Esophagus muscularis mucosa (tissue), 4 donors: ENCODE measurements at regions of chr14 and their contacts with region 1.

Region 1: GRCh38 chr14:104976198-104977007 is 1.8 kb downstream of the AHNAK2 start:
- DNase-seq: no peak
- H3K4me3 ChIP-seq: peak overlapping the region in 3 of 4 donors; percentile 64 to 70 (median 67)
- H3K27ac ChIP-seq: peak overlapping the region; percentile 87 to 99 (median 94)
- H3K4me1 ChIP-seq: peaks cover 82 to 100% (median 93%) of the 10 kb centered on the region in 4 donors
- H3K27me3 ChIP-seq: no peaks in the 10 kb centered on the region
- CTCF ChIP-seq: peak; percentile 93 to 97 (median 93)
- EP300 ChIP-seq: no peak
- POLR2A ChIP-seq: no peak

Region 2: DNA sequence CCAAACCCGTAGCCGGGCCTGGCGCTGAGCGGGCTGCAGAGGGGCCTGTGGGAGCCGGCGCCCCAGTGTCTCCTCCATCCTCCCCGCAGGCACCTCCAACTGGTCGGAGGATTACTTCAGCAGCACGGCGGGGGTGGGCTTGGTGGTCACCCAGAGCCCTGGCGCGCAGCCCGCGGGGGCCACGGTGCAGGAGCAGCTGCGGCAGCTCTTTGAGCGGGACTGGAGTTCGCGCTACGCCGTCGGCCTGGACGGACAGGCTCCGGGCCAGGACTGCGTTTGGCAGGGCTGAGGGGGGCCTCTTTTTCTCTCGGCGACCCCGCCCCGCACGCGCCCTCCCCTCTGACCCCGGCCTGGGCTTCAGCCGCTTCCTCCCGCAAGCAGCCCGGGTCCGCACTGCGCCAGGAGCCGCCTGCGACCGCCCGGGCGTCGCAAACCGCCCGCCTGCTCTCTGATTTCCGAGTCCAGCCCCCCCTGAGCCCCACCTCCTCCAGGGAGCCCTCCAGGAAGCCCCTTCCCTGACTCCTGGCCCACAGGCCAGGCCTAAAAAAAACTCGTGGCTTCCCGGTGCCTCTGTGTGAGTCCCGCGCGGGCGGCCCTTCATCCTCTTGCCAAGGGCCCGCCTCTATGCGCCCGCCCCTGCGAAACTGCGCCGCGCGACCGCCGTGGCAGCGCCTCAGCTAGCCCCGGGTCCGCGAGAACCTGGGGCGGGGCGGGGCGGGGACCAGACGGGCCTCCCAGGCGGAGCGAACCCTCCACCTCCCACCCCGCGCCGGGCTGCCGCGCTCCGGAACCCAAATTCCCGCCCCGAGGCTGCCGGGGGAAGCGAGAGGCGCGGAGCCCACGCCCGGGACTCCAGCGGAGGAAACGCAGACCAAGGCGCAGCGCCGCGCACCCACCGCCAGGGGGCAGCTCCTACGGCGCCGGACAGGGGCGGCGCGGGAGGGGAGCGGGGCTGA is 43.4 kb before region 1 on chr14:
- intact Hi-C with region 1: loop called (anchors 5 kb)
- DNase-seq: peak; percentile 93
- H3K4me3 ChIP-seq: peak overlapping the region; percentile 64 to 82 (median 67)
- H3K27ac ChIP-seq: peak overlapping the region; percentile 76 to 81 (median 78)
- H3K4me1 ChIP-seq: peaks cover 11 to 34% (median 25%) of the 10 kb centered on the region in 4 donors
- H3K27me3 ChIP-seq: no peaks in the 10 kb centered on the region
- CTCF ChIP-seq: peak; percentile 77 to 84 (median 84)
- EP300 ChIP-seq: no peak
- POLR2A ChIP-seq: no peak

Region 3: DNA sequence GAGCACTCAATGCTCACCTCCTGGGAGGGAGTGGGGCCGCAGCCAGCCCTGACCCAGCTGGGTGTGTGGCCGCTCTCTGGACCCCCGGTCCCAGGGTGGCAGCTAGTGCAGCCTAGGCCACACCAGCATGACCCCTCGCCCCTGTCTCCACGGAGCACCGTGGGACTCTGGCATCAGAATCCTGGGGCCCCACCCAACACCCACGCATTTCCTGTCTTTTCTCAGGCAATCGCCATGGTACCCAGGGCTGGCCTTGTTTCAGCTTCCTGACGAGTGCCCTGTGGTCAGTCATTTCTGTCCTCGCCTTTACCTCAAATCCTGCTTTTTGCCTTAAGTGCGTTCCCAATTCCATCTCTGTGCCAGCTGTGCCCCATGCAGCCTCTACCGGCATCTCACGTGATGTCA is 354.1 kb after region 1 on chr14:
- intact Hi-C with region 1: no loop called
- DNase-seq: no peak
- H3K4me3 ChIP-seq: no peak overlapping the region
- H3K27ac ChIP-seq: peak overlapping the region in 3 of 4 donors; percentile 0 to 31 (median 5)
- H3K4me1 ChIP-seq: peaks cover 61 to 88% (median 75%) of the 10 kb centered on the region in 4 donors
- H3K27me3 ChIP-seq: no peaks in the 10 kb centered on the region
- CTCF ChIP-seq: no peak
- EP300 ChIP-seq: no peak
- POLR2A ChIP-seq: no peak